HepG2 (cell line): ENCODE measurements at regions of chr1 and their contacts with region 1.

Region 1: DNA sequence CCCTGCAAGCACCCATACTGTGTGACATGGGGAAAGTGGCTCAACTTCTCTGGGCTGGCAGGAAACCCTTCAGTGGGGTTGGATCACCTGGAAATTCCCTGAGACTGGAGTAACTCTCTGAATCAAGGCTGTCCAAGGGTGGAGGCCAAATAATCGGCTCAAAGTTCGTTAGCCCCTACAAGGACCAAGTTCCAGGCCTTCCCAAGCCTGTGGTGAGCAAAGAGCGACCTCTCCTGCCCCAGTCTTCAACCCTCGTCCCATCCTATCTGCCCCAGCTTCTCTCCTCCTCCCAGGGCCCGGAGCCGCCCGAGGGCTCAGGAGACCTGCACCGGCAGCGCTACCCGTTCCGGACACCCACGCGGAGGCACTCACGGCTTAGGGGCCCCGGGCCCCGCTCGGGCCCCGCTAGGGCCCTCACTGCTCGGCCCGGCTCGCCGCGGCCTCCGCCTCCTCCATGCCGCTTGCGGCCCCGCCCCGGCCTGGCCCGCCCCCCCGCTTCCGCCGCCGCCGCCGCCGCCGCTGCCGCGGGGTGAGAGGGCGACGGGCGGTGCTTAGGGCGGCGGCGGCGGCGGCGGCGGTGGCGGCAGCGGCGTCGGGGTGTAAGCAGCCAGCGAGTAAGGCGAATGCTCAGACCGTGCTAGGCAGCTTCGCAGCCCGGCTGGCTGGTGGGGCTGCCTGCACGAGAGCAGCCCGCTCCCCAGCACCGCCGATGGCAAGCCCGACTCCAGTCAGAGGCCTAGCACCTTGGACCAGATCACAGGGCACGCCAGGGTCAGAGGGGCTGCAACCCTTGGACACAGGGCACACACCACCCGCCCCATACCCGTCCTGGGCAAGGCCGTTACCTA is at the start of gene POMGNT1:
- DNase-seq: peak; percentile 23
- ATAC-seq: peak; percentile 89
- H3K4me3 ChIP-seq: peak within 1 kb of the TSS; percentile 89 to 98 (median 93)
- H3K27ac ChIP-seq: peak within 1 kb of the TSS; percentile 78
- H3K4me1 ChIP-seq: peaks cover 31% of the 10 kb centered on the region
- H3K27me3 ChIP-seq: 0 out of 5 replicates have a peak, but pooled peaks cover 0 to under 1% of the 10 kb centered on the region in 2 experiments
- CTCF ChIP-seq: peak; percentile 67
- EP300 ChIP-seq: no peak
- POLR2A ChIP-seq: peak; percentile 82 to 86
- RAD21 ChIP-seq: 0 out of 2 replicates have a peak, but pooled peaks have one; percentile 14
- total RNA-seq, gene POMGNT1: 25.5 and 33.9 TPM in 2 replicates

Region 2: DNA sequence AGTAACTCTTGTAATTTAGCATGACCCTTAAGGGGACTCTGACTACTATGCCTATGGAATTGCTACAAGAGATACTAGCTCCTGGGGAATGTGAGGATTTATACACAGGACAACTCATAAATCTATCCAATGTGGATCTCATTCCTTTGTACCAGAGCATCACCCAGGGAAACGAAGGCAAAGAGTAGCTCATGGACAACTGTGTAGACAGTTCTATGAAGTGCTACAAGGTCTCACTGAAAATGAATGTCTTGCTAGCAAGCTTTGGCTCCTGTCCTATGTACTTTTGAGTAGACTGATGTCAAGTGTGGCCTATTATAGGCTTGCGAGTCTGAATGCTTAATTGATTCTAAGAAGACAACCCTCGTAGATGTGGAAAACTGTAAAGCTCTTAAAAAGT is 1085.5 kb before region 1 on chr1:
- CTCF ChIA-PET with region 1: no interaction called
- POLR2A ChIA-PET with region 1: no interaction called
- in situ Hi-C with region 1: no loop called
- intact Hi-C with region 1: no loop called
- DNase-seq: no peak
- ATAC-seq: no peak
- H3K4me3 ChIP-seq: no peak overlapping the region
- H3K27ac ChIP-seq: no peak overlapping the region
- H3K4me1 ChIP-seq: peaks cover 48% of the 10 kb centered on the region
- H3K27me3 ChIP-seq: no peaks in the 10 kb centered on the region
- CTCF ChIP-seq: no peak
- EP300 ChIP-seq: no peak
- POLR2A ChIP-seq: no peak
- RAD21 ChIP-seq: no peak

Region 3: GRCh38 chr1:46223472-46223943 is 25.3 kb after region 1 on chr1:
- CTCF ChIA-PET with region 1: no interaction called
- POLR2A ChIA-PET with region 1: interaction called, 11 read pairs
- in situ Hi-C with region 1: no loop called
- intact Hi-C with region 1: no loop called
- DNase-seq: peak; percentile 79
- ATAC-seq: peak; percentile 92
- H3K4me3 ChIP-seq: peak overlapping the region in 1 of 3 experiments; percentile 19; a peak in 1 of 6 replicates
- H3K27ac ChIP-seq: no peak overlapping the region
- H3K4me1 ChIP-seq: peaks cover 51% of the 10 kb centered on the region
- H3K27me3 ChIP-seq: no peaks in the 10 kb centered on the region
- CTCF ChIP-seq: peak; percentile 91
- EP300 ChIP-seq: no peak
- POLR2A ChIP-seq: no peak
- RAD21 ChIP-seq: peak; percentile 76; the same call in 1 of the 2 replicates

Region 4: DNA sequence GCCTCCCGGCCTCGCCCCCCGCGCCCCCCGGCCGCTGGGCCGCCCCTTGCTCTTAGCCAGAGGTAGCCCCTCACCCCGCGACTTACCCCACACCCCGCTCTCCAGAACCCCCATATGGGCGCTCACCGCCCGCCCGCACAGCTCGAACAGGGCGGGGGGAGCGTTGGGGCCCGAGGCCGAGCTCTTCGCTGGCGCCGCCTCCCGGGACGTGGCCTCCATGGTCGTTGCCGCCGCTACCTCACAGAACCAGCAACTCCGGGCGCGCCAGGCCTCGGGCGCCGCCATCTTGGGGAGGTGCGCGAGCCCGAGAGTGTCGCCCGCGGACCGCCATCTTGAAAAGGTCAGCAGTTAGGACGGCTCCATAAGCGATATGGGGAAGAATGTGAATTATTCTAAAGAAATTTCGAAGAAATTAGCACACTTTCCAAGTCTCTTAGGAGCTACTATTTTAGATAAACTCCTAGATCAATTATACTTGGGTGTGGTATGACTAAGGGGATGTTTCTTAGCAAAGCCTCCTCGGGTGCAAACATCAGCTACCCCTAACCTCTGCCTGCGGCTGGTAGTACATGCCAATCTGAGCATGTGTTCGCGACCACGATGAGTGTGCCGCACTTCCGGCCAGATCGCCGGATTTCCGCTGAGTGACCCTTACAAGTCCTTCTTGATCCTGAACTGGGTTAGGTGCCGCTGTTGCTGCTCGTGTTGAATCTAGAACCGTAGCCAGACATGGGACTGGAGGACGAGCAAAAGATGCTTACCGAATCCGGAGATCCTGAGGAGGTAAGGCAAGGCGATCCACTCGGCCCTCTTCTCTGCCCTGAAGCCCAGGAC is 105.1 kb after region 1 on chr1 and contains the starts of genes LRRC41 and UQCRH:
- CTCF ChIA-PET with region 1: no interaction called
- POLR2A ChIA-PET with region 1: no interaction called
- in situ Hi-C with region 1: no loop called
- intact Hi-C with region 1: no loop called
- DNase-seq: peak; percentile 96
- ATAC-seq: peak; percentile 83
- H3K4me3 ChIP-seq: peak within 1 kb of the TSS; percentile 93 to 100 (median 96)
- H3K27ac ChIP-seq: peak within 1 kb of the TSS; percentile 96
- H3K4me1 ChIP-seq: peaks cover 52% of the 10 kb centered on the region
- H3K27me3 ChIP-seq: peaks cover 0 to 4% of the 10 kb centered on the region in 2 experiments; a peak in 1 of 5 replicates
- CTCF ChIP-seq: peak; percentile 35
- EP300 ChIP-seq: 0 out of 4 replicates have a peak, but pooled peaks of 1 of the 2 experiments have one; percentile 5
- POLR2A ChIP-seq: peak; percentile 84 to 85
- RAD21 ChIP-seq: no peak
- total RNA-seq, gene LRRC41: 51.9 and 53.6 TPM in 2 replicates
- total RNA-seq, gene UQCRH: 556 and 776 TPM in 2 replicates